AG04450 (cell line): ENCODE measurements at regions of chr4 and their contacts with region 1.

Region 1: DNA sequence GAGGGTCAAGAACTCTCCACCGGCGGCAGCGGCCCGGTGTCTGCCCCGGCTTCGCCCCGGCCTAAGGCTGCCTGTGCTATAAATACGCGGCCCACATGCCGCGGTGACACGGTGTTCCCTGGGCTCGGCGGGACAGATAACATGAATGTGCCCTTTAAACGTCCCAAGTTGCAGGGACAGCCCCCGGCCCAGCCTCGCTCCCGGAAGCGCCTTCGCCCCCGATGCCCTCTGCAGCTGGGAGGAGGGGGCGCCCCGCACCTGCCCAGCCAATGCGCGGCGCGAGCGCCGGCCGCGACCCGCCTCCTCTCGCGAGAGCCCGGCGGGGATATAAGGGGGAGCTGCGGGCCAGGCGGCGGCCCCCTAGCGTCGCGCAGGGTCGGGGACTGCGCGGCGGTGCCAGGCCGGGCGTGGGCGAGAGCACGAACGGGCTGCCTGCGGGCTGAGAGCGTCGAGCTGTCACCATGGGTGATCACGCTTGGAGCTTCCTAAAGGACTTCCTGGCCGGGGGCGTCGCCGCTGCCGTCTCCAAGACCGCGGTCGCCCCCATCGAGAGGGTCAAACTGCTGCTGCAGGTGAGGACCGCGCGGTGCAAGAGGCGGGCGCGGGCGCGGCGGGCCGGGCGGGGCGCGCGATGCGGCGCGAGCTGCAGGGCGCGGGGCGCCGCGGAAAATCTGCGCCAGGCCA is at the start of gene SLC25A4:
- DNase-seq: peak; percentile 32
- H3K4me3 ChIP-seq: peak within 1 kb of the TSS; percentile 87
- H3K27ac ChIP-seq: no peak within 1 kb of the TSS
- H3K27me3 ChIP-seq: peaks cover 6% of the 10 kb centered on the region
- CTCF ChIP-seq: peak; percentile 38
- polyA plus RNA-seq, gene SLC25A4: 16.4 and 17.6 TPM in 2 replicates

Region 2: GRCh38 chr4:185005216-185005819 is 137.7 kb before region 1 on chr4:
- CTCF ChIA-PET with region 1: interaction called, 16 read pairs
- POLR2A ChIA-PET with region 1: no interaction called
- DNase-seq: peak; percentile 36
- H3K4me3 ChIP-seq: peak overlapping the region; percentile 39; the same call in 1 of the 2 replicates
- H3K27ac ChIP-seq: no peak overlapping the region
- H3K27me3 ChIP-seq: peaks cover 14% of the 10 kb centered on the region
- CTCF ChIP-seq: peak; percentile 96

Region 3: DNA sequence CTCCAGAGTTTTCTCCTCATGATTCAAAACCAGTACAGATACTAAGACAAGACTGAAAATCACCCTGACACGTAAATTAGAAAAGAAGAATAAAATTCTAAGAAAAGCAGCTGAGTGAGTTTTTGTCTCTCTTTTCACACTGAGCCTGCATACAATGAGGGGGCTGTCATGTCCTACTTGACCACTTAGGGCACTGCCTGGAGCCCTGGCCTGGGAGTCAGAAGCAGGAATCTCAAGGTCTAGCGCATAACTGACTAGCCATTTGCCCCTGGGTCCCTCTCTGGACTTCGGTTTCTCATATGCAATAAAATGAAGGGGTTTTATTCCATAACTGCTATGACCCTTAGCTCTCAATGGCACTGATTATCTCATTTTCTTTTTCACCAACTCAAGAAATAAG is 36.7 kb before region 1 on chr4:
- CTCF ChIA-PET with region 1: no interaction called
- POLR2A ChIA-PET with region 1: no interaction called
- DNase-seq: no peak
- H3K4me3 ChIP-seq: no peak overlapping the region
- H3K27ac ChIP-seq: no peak overlapping the region
- H3K27me3 ChIP-seq: no peaks in the 10 kb centered on the region
- CTCF ChIP-seq: no peak